Psoas muscle (tissue), 8 donors: ENCODE measurements at regions of chr3 and their contacts with region 1.

Region 1: GRCh38 chr3:10417849-10418248 is 87.5 kb downstream of the ATP2B2 start:
- DNase-seq: no peak
- ATAC-seq: peak in 3 of 4 donors; percentile 54 to 88 (median 79)
- H3K4me3 ChIP-seq: no peak overlapping the region
- H3K27ac ChIP-seq: no peak overlapping the region
- H3K4me1 ChIP-seq: no peaks in the 10 kb centered on the region
- H3K27me3 ChIP-seq: no peaks in the 10 kb centered on the region
- CTCF ChIP-seq: peak; percentile 28

Region 2: DNA sequence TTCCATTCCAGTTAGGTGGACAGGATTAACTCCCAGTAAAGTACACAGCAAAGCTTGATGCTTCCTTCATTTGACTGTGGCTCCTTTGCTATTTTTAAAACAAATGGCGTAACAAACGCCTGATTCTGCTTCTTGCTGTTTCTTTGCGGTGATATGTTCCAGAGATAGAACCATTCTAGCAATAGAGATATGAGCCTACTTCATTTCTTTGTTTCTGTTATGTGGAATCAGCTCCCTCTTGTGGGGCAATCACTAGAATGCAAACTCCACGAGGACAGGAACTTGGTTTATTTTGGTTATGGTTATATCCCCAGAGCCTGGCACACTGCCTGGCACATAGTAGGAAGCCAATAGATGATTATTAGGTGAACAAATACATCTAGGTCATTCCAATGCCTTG is 275.6 kb after region 1 on chr3:
- intact Hi-C with region 1: loop called (anchors 5 to 10 kb)
- DNase-seq: no peak
- ATAC-seq: peak; percentile 76 to 91 (median 79)
- H3K4me3 ChIP-seq: no peak overlapping the region
- H3K27ac ChIP-seq: peak overlapping the region; percentile 64
- H3K4me1 ChIP-seq: peaks cover 9% of the 10 kb centered on the region
- H3K27me3 ChIP-seq: no peaks in the 10 kb centered on the region
- CTCF ChIP-seq: peak; percentile 54

Region 3: DNA sequence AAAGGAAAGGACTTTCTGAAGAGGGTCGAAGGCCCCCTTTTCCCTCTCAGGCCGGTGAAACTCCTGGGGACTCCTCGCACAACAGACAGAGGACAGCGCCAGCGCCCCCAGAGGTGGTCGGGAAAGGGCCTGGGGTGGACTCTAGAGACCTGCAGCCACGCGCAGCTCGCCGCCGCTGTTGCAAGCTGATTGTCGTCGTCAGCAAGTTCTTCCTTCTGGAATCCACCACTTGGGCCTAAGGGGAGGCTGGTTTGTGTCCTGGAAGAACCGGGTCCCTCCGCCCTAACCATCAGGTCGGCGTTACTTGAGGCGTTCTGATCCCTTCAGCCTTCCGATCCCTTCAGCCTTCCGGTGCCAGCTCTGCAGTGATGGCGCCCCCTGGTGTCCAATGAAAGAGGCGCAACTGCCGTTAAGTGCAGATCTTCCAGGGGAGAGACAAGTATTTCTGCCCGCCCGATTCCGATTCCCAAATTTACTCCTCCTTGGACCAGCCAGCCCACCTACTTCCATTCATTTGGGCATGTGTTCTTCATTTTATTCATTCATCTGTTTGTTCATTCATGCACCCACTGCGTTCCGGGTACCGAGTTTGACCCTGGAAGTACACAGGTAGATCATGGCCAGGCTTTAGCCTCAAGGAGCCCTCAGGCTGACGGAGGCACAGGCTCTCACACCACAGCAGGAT is 321.0 kb after region 1 on chr3:
- intact Hi-C with region 1: loop called (anchors 5 kb)
- DNase-seq: peak; percentile 71 to 80
- ATAC-seq: peak; percentile 85 to 89 (median 87)
- H3K4me3 ChIP-seq: peak overlapping the region; percentile 60
- H3K27ac ChIP-seq: no peak overlapping the region
- H3K4me1 ChIP-seq: no peaks in the 10 kb centered on the region
- H3K27me3 ChIP-seq: peaks cover 0 to 16% (median 2%) of the 10 kb centered on the region in 3 donors
- CTCF ChIP-seq: peak; percentile 75